ENCODE measurements at regions of chr10 and their contacts with region 1.

Region 1: GRCh38 chr10:11515596-11516430 is 95.6 kb downstream of the USP6NL start:
- DNase-seq: no peak
- H3K4me3 ChIP-seq: no peak overlapping the region
- H3K27ac ChIP-seq: peak overlapping the region in 5 of 8 donors; percentile 12 to 64 (median 52)
- H3K4me1 ChIP-seq: peaks cover 19 to 55% (median 29%) of the 10 kb centered on the region in 6 donors
- H3K27me3 ChIP-seq: no peaks in the 10 kb centered on the region
- CTCF ChIP-seq: peak; percentile 75 to 92 (median 86)
- POLR2A ChIP-seq: no peak

Region 2: DNA sequence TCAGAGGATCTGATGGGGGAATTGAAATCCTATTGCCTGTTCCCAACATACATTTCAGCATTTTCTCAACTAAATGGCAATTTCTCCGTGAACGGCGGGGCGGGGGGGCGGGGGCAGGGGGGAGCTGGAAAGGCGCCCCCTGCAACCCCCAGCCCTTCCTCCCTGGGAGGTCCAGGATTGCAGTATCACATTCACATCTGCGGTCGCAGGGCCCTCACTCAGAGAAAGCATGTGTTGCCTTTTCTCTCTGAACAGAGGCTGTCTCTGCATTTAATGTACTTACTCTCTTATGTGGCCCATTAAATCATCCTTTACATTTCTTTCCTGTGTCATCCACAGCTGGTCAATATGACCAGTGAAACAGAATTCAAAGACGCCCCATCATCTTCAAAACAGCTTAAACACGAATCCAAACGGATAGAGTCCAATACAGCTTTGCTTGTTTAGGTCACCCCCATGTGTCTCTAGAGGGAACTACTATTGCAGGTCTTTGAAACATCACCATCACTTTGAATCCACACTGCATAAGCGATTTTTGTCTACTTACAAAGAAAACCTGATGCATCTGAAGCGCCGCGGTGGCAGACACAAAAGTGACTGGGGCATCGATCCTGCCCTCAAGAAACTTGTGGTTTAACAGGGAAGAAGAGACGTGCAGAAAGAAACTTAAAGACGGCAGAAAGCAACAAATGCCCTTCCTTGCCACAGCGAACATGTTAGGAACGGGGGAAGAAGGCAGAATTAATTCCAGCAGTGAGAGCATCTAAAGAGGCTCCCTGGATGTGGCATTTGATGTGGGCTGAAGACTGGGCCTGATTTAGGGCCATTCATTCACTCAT is 209.3 kb after region 1 on chr10:
- intact Hi-C with region 1: loop called (anchors 5 kb)
- DNase-seq: peak; percentile 68
- H3K4me3 ChIP-seq: no peak overlapping the region
- H3K27ac ChIP-seq: no peak overlapping the region
- H3K4me1 ChIP-seq: peaks cover 0 to 26% (median 14%) of the 10 kb centered on the region in 6 donors
- H3K27me3 ChIP-seq: no peaks in the 10 kb centered on the region
- CTCF ChIP-seq: peak; percentile 40 to 79 (median 72)
- POLR2A ChIP-seq: no peak

Region 3: GRCh38 chr10:11757821-11758463 is 242.1 kb after region 1 on chr10:
- intact Hi-C with region 1: loop called (anchors 1 kb)
- DNase-seq: peak; percentile 97
- H3K4me3 ChIP-seq: no peak overlapping the region
- H3K27ac ChIP-seq: peak overlapping the region in 5 of 8 donors; percentile 35 to 72 (median 62)
- H3K4me1 ChIP-seq: peaks cover 0 to 26% (median 11%) of the 10 kb centered on the region in 6 donors
- H3K27me3 ChIP-seq: no peaks in the 10 kb centered on the region
- CTCF ChIP-seq: peak; percentile 88 to 99 (median 94)
- POLR2A ChIP-seq: no peak